Activated T-helper 1 cell treated with anti-CD3 and anti-CD28 coated beads, Interleukin-12 subunit alpha, Interleukin-12 subunit beta, Interleukin-2, Interleukin-4 antibody, amounts not matched to agents 30 ng/mL and 10 ng/mL and 1 ng/mL, durations not matched to agents 14 hours and 24 hours and 36 hours (primary cell): ENCODE measurements at regions of chr12 and their contacts with region 1.

Region 1: GRCh38 chr12:12327802-12328201 is 22.2 kb downstream of the MANSC1 start:
- DNase-seq: no peak
- H3K4me3 Mint-ChIP-seq: no peak overlapping the region
- H3K27ac Mint-ChIP-seq: no peak overlapping the region
- H3K4me1 Mint-ChIP-seq: peaks cover 13% of the 10 kb centered on the region
- H3K27me3 Mint-ChIP-seq: peaks cover 2% of the 10 kb centered on the region

Region 2: DNA sequence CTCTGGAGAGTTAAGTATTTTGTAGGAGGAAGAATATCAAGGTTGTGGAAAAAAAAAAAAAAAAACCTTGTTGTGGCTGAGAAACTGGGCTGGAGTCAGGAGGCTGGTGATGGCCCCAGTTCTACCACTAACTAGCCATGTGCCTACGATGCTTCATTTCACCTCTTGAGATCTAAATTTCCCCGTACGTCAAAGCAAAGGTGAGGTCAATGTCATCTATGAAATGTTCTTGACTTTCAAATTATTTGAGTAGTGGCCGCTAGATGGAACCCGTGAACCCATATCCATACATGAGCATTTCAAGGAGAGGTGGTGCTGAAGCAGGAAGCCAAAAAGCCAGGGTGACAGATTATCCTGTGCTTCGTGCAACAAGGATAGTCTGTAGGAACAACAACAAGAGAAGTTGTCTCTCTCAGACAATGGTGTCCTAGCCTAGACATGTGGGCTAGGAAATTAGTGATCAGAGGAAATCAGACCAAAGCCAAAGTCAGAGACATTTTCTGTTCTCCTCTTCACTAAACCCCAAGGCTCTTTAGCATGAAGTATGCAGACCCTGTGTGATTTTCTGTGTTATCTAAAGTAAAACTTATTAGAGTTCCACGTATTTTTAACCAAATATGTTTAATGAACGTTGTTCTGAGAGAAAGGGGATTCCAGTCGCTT is 773.8 kb before region 1 on chr12:
- intact Hi-C with region 1: loop called (anchors 2 kb)
- DNase-seq: peak; percentile 33
- H3K4me3 Mint-ChIP-seq: peak overlapping the region; percentile 45
- H3K27ac Mint-ChIP-seq: no peak overlapping the region
- H3K4me1 Mint-ChIP-seq: peaks cover 27% of the 10 kb centered on the region
- H3K27me3 Mint-ChIP-seq: peaks cover 8% of the 10 kb centered on the region

Region 3: GRCh38 chr12:12039897-12040296 is 287.9 kb before region 1 on chr12:
- intact Hi-C with region 1: loop called (anchors 5 kb)
- DNase-seq: no peak
- H3K4me3 Mint-ChIP-seq: no peak overlapping the region
- H3K27ac Mint-ChIP-seq: no peak overlapping the region
- H3K4me1 Mint-ChIP-seq: peaks cover 12% of the 10 kb centered on the region
- H3K27me3 Mint-ChIP-seq: peaks cover 16% of the 10 kb centered on the region

Region 4: GRCh38 chr12:12081836-12082497 is 245.8 kb before region 1 on chr12:
- intact Hi-C with region 1: loop called (anchors 1 kb)
- DNase-seq: no peak
- H3K4me3 Mint-ChIP-seq: no peak overlapping the region
- H3K27ac Mint-ChIP-seq: no peak overlapping the region
- H3K4me1 Mint-ChIP-seq: no peaks in the 10 kb centered on the region
- H3K27me3 Mint-ChIP-seq: no peaks in the 10 kb centered on the region

Region 5: GRCh38 chr12:12859690-12860089 is 531.9 kb after region 1 on chr12:
- intact Hi-C with region 1: no loop called
- DNase-seq: no peak
- H3K4me3 Mint-ChIP-seq: no peak overlapping the region
- H3K27ac Mint-ChIP-seq: no peak overlapping the region
- H3K4me1 Mint-ChIP-seq: no peaks in the 10 kb centered on the region
- H3K27me3 Mint-ChIP-seq: no peaks in the 10 kb centered on the region